ENCODE measurements at regions of chr2 and their contacts with region 1.

Region 1: GRCh38 chr2:149017116-149017985 is 21.1 kb upstream of the LYPD6B start:
- DNase-seq: peak; percentile 72
- ATAC-seq: peak; percentile 80
- H3K4me3 ChIP-seq: no peak overlapping the region
- H3K27ac ChIP-seq: no peak overlapping the region
- H3K4me1 ChIP-seq: no peaks in the 10 kb centered on the region
- H3K27me3 ChIP-seq: no peaks in the 10 kb centered on the region; the same call in 1 of the 2 replicates
- CTCF ChIP-seq: peak; percentile 90
- POLR2A ChIP-seq: no peak
- RAD21 ChIP-seq: peak; percentile 88

Region 2: DNA sequence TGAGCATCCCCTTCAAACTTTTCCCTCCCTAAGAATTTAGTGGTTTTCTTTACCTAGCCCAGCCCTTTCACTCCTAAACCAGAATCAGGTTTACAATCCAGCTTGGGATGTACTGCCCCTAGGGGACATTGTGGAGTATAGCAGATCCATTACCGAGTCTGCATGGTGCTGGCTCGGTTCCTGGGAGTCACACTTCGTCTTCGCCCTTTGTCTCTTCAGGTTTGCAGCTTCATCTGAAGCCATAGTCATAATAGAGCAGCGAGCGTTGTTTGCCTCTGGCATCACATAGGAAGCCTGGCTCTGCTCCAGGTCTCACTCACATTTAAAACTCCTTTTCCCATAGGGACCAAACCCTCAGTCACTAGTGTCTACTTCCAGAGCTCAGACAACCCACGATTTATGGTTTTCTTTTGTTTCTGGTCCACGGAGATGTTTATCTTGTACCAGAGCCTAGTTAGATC is 296.2 kb after region 1 on chr2:
- CTCF ChIA-PET with region 1: no interaction called
- POLR2A ChIA-PET with region 1: no interaction called
- dilution Hi-C with region 1: no loop called
- in situ Hi-C with region 1: loop called (anchors 10 kb)
- intact Hi-C with region 1: loop called (anchors 1 kb)
- DNase-seq: peak; percentile 24
- ATAC-seq: peak; percentile 79
- H3K4me3 ChIP-seq: no peak overlapping the region
- H3K27ac ChIP-seq: no peak overlapping the region
- H3K4me1 ChIP-seq: no peaks in the 10 kb centered on the region
- H3K27me3 ChIP-seq: no peaks in the 10 kb centered on the region
- CTCF ChIP-seq: peak; percentile 56
- POLR2A ChIP-seq: no peak
- RAD21 ChIP-seq: peak; percentile 61

Measured in IMR-90 (cell line).